Naive thymus-derived CD4-positive, alpha-beta T cell (primary cell): ENCODE measurements at regions of chr6 and their contacts with region 1.

Region 1: GRCh38 chr6:169654598-169655391 is 47.0 kb downstream of the WDR27 start:
- DNase-seq: peak; percentile 59 to 86 (median 73)
- ATAC-seq: peak; percentile 99
- H3K4me3 ChIP-seq: peak overlapping the region; percentile 64
- H3K4me3 Mint-ChIP-seq: peak overlapping the region; percentile 86 to 95 (median 92)
- H3K27ac ChIP-seq: peak overlapping the region; percentile 72
- H3K27ac Mint-ChIP-seq: peak overlapping the region; percentile 71 to 95 (median 89)
- H3K4me1 ChIP-seq: no peaks in the 10 kb centered on the region
- H3K4me1 Mint-ChIP-seq: peaks cover 0 to 19% (median 15%) of the 10 kb centered on the region in 7 donors
- H3K27me3 ChIP-seq: no peaks in the 10 kb centered on the region
- H3K27me3 Mint-ChIP-seq: no peaks in the 10 kb centered on the region

Region 2: DNA sequence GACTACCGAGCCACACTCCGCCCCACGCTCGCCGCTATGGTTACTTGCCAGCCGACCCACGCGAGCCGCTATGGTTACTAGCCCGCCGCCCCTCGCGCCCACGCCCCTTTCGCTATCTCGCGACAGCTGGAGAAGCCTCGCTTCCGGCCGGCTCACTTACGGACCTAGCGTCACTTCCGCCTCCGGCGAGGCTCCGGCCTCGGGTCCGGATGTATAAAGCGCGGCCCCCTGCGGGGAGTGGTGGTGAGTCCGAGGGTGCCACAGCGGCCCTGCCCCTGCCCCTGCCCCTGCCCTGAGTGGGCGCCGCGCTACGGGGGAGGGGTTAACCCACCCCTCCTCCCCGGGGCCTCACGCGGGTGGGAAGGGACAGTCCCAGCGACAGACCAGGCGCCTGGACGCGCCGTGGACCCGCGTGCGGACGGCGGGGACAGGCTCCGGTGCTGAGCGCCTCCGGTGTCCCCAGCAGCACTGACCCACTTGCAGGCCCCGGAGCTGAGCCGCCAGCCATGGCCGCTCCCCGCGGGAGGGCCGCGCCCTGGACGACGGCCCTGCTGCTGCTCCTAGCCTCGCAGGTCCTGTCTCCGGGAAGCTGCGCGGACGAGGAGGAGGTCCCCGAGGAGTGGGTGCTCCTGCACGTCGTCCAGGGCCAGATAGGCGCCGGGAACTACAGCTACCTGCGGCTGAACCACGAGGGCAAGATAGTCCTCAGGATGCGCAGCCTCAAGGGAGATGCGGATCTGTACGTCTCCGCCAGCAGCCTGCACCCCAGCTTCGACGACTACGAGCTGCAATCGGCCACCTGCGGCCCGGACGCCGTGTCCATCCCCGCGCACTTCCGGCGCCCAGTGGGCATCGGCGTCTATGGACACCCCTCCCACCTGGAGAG is 47.4 kb after region 1 on chr6 and contains the starts of genes C6orf120 and WDR27:
- CTCF ChIA-PET with region 1: interaction called, 3 read pairs
- POLR2A ChIA-PET with region 1: interaction called, 4 read pairs
- intact Hi-C with region 1: loop called (anchors 1 kb)
- DNase-seq: peak; percentile 91 to 98 (median 94)
- ATAC-seq: peak; percentile 93
- H3K4me3 ChIP-seq: peak within 1 kb of the TSS; percentile 95
- H3K4me3 Mint-ChIP-seq: peak within 1 kb of the TSS; percentile 89 to 94 (median 92)
- H3K27ac ChIP-seq: peak within 1 kb of the TSS; percentile 98
- H3K27ac Mint-ChIP-seq: peak within 1 kb of the TSS; percentile 88 to 96 (median 93)
- H3K4me1 ChIP-seq: peaks cover 22 to 36% of the 10 kb centered on the region in 2 donors
- H3K4me1 Mint-ChIP-seq: peaks cover 28 to 66% (median 55%) of the 10 kb centered on the region in 7 donors
- H3K27me3 ChIP-seq: no peaks in the 10 kb centered on the region
- H3K27me3 Mint-ChIP-seq: no peaks in the 10 kb centered on the region
- total RNA-seq, gene C6orf120: 16.0 to 38.1 (median 19.3) TPM
- total RNA-seq, gene WDR27: 22.7 to 89.0 (median 41.4) TPM

Region 3: DNA sequence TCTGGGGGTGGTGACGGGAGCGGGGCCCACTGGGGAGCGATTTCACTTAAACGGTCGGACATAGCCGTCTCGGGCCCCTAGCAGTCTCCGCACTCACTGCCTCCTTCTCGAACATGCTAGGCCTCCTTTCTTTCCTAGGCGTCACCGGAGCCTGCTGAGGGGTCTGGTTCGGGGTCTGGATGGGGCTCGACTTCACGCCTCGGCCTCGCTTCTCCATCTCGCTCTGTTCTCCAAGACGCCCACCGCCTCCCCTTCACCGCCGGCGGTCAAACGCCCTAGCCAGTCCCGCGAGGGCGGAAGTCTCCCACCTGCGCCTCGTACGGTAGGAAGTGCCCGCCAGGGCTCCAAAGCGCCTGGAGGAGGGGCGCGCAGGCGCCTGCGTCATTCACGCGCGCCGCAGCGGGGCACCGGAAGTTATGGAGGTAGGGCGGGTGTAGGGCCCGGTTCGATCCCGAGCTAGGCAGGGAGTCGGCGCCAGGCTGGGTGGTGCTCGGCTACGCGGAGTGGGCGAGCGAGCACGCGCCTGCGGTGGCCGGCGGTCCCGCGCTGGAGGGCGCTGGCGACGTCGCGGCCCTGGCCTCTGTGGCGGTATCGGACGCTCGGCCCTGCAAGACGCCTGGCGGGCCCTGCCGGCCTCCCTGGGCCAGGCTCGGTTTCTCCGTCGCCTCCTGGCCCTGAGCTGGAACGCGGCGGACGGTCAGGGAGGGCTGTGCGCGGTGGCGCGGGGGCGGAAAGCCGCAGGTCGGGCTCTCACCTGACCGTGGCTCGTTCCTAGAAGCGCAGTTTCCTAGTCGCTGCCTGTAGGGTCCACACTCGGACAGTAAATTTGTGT is 96.7 kb after region 1 on chr6 and contains the starts of genes DYNLT2 and ERMARD:
- CTCF ChIA-PET with region 1: no interaction called
- POLR2A ChIA-PET with region 1: no interaction called
- intact Hi-C with region 1: loop called (anchors 1 kb)
- DNase-seq: peak; percentile 89 to 97 (median 94)
- ATAC-seq: peak; percentile 98
- H3K4me3 ChIP-seq: peak within 1 kb of the TSS; percentile 84
- H3K4me3 Mint-ChIP-seq: peak within 1 kb of the TSS; percentile 92 to 100 (median 98)
- H3K27ac ChIP-seq: peak within 1 kb of the TSS; percentile 92
- H3K27ac Mint-ChIP-seq: peak within 1 kb of the TSS; percentile 96 to 100 (median 100)
- H3K4me1 ChIP-seq: peaks cover 17% of the 10 kb centered on the region in 2 donors
- H3K4me1 Mint-ChIP-seq: peaks cover 21 to 43% (median 37%) of the 10 kb centered on the region in 7 donors
- H3K27me3 ChIP-seq: no peaks in the 10 kb centered on the region
- H3K27me3 Mint-ChIP-seq: peaks cover 0 to 4% (median 0%) of the 10 kb centered on the region in 5 donors
- total RNA-seq, gene DYNLT2: 2.5 to 4.7 (median 4.1) TPM
- total RNA-seq, gene ERMARD: 30.3 to 43.7 (median 35.7) TPM